BJ (cell line): ENCODE measurements at regions of chr15 and their contacts with region 1.

Region 1: GRCh38 chr15:25438601-25439368 is at the start of gene UBE3A:
- DNase-seq: peak; percentile 60
- H3K4me3 ChIP-seq: peak within 1 kb of the TSS; percentile 99
- H3K27me3 ChIP-seq: no peaks in the 10 kb centered on the region
- CTCF ChIP-seq: peak; percentile 26; the same call in 1 of the 2 replicates
- polyA plus RNA-seq, gene UBE3A: 23.5 and 36.2 TPM in 2 replicates

Region 2: DNA sequence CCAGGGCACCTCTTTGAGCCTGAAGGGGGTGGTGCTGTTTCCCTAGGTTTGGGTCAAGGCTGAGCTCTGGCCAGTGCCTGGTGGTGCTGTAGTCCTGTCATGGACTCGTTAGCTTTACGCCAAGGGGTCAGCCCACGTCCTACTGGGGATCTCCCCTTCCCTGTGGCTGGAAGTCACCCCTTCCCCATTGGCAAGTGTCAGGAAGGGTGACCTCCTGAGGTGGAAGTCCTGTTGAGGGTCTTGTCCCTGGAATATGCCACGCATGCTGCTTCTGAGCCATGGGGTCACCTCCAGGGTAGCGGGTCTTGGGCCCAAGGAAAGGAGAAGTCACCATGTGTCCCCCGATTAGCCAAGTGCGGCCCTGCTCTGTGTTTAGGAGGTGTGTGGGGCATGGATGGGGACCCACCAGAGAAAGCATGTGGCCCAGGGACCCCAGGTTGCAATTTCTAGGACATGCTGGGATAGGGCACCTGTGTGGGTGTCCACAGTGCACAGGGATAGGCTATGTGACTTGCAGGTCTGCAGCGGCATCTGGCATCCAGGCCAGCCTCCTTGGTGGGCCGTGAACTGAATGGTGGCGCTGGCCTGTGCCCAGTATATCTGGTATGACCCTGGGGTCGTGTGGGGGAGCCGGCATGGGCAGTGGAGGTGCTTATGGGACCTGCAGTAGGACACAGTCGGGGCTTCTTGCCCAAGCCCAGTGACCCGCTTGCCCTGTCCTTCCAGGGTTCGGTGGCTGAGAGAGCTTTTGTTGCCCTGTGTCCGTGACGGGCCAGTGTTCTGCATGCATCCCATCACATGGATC is 257.3 kb before region 1 on chr15:
- CTCF ChIA-PET with region 1: no interaction called
- POLR2A ChIA-PET with region 1: interaction called, 10 read pairs
- DNase-seq: no peak
- H3K4me3 ChIP-seq: no peak overlapping the region
- H3K27me3 ChIP-seq: no peaks in the 10 kb centered on the region
- CTCF ChIP-seq: no peak